ENCODE measurements at regions of chr17 and their contacts with region 1.

Region 1: GRCh38 chr17:37406635-37407461 is at the starts of genes ACACA and TADA2A:
- DNase-seq: peak; percentile 86
- H3K4me3 Mint-ChIP-seq: peak within 1 kb of the TSS; percentile 99
- H3K27ac Mint-ChIP-seq: peak within 1 kb of the TSS; percentile 97
- H3K4me1 Mint-ChIP-seq: peaks cover 55% of the 10 kb centered on the region
- H3K27me3 Mint-ChIP-seq: no peaks in the 10 kb centered on the region
- total RNA-seq, gene ACACA: 58.2 to 64.4 TPM
- total RNA-seq, gene TADA2A: 35.8 to 36.5 TPM

Region 2: GRCh38 chr17:37373530-37374159 is 33.2 kb before region 1 on chr17:
- CTCF ChIA-PET with region 1: interaction called, 35 read pairs
- POLR2A ChIA-PET with region 1: no interaction called
- intact Hi-C with region 1: no loop called
- DNase-seq: peak; percentile 83
- H3K4me3 Mint-ChIP-seq: no peak overlapping the region
- H3K27ac Mint-ChIP-seq: no peak overlapping the region
- H3K4me1 Mint-ChIP-seq: peaks cover 6% of the 10 kb centered on the region
- H3K27me3 Mint-ChIP-seq: no peaks in the 10 kb centered on the region

Region 3: DNA sequence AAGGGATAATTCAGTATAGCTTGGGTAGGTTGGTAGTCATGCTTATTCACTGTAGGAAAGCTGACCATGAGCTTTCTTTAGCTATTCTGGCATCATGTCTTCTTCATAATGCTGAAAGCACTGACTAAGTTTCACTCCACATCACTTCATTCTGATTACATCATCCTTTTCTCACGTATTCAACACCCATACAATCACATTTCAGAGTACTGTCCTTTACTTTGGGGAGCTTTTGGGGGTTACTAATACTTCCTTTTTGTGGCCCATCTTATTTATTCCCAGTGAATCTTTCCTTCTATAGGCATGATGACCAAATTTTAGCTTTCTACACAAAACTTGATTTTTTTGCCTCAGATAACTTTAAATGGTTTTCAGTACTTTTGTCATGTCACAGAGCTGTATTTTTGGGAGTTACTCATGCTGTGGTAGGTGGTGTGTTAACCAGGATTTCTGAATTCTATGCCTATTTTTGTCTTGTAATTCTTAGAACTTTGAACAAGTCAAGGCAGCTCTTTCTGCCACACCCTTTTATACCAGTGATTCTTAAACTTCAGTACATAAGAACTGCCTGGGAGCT is 23.3 kb after region 1 on chr17:
- CTCF ChIA-PET with region 1: interaction called, 4 read pairs
- POLR2A ChIA-PET with region 1: interaction called, 15 read pairs
- intact Hi-C with region 1: loop called (anchors 2 kb)
- DNase-seq: no peak
- H3K4me3 Mint-ChIP-seq: peak overlapping the region; percentile 54
- H3K27ac Mint-ChIP-seq: peak overlapping the region; percentile 97
- H3K4me1 Mint-ChIP-seq: peaks cover 32% of the 10 kb centered on the region
- H3K27me3 Mint-ChIP-seq: no peaks in the 10 kb centered on the region

Region 4: GRCh38 chr17:37489197-37490001 is 82.6 kb after region 1 on chr17 and contains the start of gene DUSP14:
- CTCF ChIA-PET with region 1: no interaction called
- POLR2A ChIA-PET with region 1: interaction called, 3 read pairs
- intact Hi-C with region 1: loop called (anchors 2 kb)
- DNase-seq: peak; percentile 84
- H3K4me3 Mint-ChIP-seq: peak within 1 kb of the TSS; percentile 90
- H3K27ac Mint-ChIP-seq: peak within 1 kb of the TSS; percentile 88
- H3K4me1 Mint-ChIP-seq: peaks cover 47% of the 10 kb centered on the region
- H3K27me3 Mint-ChIP-seq: no peaks in the 10 kb centered on the region
- total RNA-seq, gene DUSP14: 17.4 to 19.0 TPM